ENCODE measurements at regions of chr16 and their contacts with region 1.

Region 1: GRCh38 chr16:15647294-15648014 is 2.6 kb upstream of the NDE1 start:
- DNase-seq: no peak
- H3K4me3 ChIP-seq: no peak overlapping the region
- H3K27ac ChIP-seq: no peak overlapping the region
- H3K4me1 ChIP-seq: peaks cover 27 to 39% (median 35%) of the 10 kb centered on the region in 4 donors
- H3K27me3 ChIP-seq: peaks cover 0 to 4% (median 0%) of the 10 kb centered on the region in 4 donors
- CTCF ChIP-seq: no peak
- EP300 ChIP-seq: no peak
- POLR2A ChIP-seq: no peak

Region 2: GRCh38 chr16:15682105-15682570 is 34.7 kb after region 1 on chr16:
- intact Hi-C with region 1: no loop called
- DNase-seq: no peak
- H3K4me3 ChIP-seq: no peak overlapping the region
- H3K27ac ChIP-seq: peak overlapping the region in 1 of 4 donors; percentile 26
- H3K4me1 ChIP-seq: peaks cover 0 to 13% (median 0%) of the 10 kb centered on the region in 4 donors
- H3K27me3 ChIP-seq: no peaks in the 10 kb centered on the region
- CTCF ChIP-seq: peak; percentile 20 to 50 (median 31)
- EP300 ChIP-seq: no peak
- POLR2A ChIP-seq: no peak

Region 3: DNA sequence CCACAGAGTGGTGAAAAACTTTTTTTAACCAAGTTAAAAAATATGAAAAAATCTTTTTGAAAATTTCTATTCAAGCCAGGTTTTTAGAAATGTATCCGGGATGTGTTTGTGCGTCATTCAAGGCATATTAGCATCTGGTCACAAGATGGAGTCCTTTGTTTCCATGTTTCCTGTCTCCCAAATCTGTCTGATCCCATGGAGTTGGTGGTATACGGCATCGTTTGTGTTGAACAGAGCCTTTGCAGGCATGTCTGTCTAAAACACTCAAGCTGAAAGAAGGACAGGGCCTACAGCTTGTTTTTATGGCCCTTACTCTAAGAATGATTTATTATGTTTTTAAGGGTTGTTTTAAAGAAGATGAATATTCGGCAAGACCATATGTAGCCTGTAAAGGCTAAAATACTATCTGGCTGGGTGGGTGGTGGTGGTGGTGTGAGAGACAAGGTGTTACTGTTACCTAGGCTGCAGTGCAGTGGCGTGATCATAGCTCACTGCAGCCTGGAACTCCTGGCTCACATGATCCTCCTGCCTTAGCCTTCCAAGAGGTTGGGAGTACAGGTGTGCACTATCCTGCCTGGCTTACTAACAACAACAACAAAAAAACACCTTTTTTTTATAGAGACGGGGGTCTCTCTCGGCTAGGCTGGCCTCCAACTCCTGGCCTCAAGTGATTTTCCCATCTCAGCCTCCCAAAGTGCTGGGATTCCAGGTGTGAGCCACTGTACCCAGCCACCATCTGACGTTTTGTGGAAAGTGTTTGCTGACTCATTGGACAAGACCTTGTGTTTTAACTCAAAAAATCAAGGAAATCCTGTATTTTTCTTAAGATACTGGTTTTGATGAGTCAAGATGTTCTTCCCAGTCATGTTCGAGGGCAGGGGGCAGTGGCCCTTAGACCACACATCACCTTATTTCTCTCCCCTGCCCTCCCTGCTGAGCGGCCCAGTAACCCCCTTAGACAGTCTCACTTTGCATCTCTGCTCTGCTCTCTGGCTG is 54.8 kb after region 1 on chr16:
- intact Hi-C with region 1: loop called (anchors 2 kb)
- DNase-seq: no peak
- H3K4me3 ChIP-seq: no peak overlapping the region
- H3K27ac ChIP-seq: peak overlapping the region; percentile 58 to 80 (median 76)
- H3K4me1 ChIP-seq: peaks cover 0 to 20% (median 12%) of the 10 kb centered on the region in 4 donors
- H3K27me3 ChIP-seq: no peaks in the 10 kb centered on the region
- CTCF ChIP-seq: no peak
- EP300 ChIP-seq: no peak
- POLR2A ChIP-seq: no peak

Measured in esophagus muscularis mucosa (tissue), 4 donors.